Spleen (tissue), 13 donors: ENCODE measurements at regions of chr22 and their contacts with region 1.

Region 1: DNA sequence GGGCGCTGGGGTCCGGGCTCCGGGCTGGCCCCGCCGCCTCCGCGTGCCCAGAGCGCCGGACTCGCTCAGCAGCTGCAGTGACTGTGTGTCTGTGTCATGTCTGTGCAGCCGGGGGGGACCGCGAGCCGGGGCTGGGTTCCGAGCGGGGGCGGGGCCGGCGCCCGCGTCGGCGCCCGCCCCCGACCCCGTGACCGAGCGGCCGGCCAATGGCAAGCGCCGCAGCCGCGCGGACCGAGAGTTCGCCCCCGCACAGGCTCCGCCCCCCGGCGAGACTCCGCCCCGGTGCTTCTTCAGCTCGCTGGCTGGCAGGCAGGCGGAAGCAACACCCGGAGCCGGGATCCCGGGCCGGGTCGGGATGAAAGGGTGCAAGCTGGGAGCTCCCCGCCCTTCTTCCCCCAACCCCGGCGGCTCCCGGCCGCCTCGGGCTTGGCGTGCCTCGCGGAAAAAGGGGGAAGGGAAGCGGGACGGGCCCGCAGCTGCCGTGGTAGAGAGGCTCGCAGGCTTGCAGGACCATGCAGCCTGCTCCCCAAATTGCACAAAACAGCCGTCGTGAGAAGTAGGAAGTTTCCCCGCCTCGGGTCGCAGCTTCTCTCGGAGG is 750 bp upstream of the LARGE1 start:
- DNase-seq: peak; percentile 97
- H3K4me3 ChIP-seq: peak overlapping the region; percentile 53 to 85 (median 64)
- H3K27ac ChIP-seq: peak overlapping the region in 6 of 8 donors; percentile 30 to 76 (median 67)
- H3K4me1 ChIP-seq: peaks cover 9 to 66% (median 39%) of the 10 kb centered on the region in 6 donors
- H3K27me3 ChIP-seq: peaks cover 0 to 64% (median 11%) of the 10 kb centered on the region in 7 donors
- CTCF ChIP-seq: no peak
- POLR2A ChIP-seq: peak in 1 of 3 donors; percentile 65

Region 2: DNA sequence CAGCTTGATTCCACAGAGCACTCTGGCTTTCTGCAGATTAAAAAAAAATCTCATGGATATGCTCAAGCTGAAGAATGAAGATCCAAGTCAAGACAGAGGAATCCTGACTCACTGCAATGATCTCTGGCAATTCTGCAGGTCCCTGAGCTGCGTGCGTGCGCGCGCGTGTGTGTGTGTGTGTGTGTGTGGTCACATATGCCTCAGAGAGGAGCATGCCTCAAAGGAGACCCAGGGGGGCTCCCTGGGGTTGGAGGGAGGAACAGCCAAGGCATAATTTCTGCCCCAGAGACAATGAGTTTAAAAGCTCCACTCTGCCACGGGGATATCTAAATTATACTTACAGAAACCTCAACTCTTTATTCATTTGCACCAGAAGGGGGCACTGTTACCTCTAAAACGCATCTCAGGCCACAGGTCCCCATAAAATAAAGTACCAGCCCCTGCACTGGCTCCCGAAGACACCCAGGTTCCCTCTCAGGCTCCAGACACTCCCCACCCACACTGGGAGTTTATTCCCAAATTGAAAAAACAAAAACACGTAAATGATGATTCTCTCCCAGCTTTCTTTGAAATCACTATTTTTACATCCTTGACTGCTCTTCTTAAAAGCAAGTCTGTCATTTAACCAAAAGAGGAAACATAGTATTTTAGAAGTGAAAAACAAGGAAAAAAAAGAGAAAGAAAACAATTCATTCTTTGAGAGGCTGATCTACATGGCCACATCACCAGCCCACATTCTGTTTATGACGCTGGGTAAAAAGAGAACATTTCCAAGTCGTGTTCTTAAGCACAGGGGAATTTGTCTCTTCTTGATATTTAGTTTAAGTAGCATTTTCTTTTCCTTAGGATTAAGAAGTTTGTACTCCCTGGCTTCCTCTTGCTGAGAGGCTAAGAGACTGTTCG is 401.7 kb before region 1 on chr22:
- intact Hi-C with region 1: loop called (anchors 5 kb)
- DNase-seq: no peak
- H3K4me3 ChIP-seq: no peak overlapping the region
- H3K27ac ChIP-seq: peak overlapping the region in 2 of 8 donors; percentile 40 to 53
- H3K4me1 ChIP-seq: peaks cover 0 to 56% (median 18%) of the 10 kb centered on the region in 6 donors
- H3K27me3 ChIP-seq: no peaks in the 10 kb centered on the region
- CTCF ChIP-seq: peak in 9 of 11 experiments; percentile 26 to 63 (median 53)
- POLR2A ChIP-seq: no peak

Region 3: GRCh38 chr22:33785283-33785968 is 135.6 kb before region 1 on chr22:
- intact Hi-C with region 1: no loop called
- DNase-seq: no peak
- H3K4me3 ChIP-seq: no peak overlapping the region
- H3K27ac ChIP-seq: no peak overlapping the region
- H3K4me1 ChIP-seq: peaks cover 0 to 13% (median 9%) of the 10 kb centered on the region in 6 donors
- H3K27me3 ChIP-seq: no peaks in the 10 kb centered on the region
- CTCF ChIP-seq: no peak
- POLR2A ChIP-seq: no peak

Region 4: DNA sequence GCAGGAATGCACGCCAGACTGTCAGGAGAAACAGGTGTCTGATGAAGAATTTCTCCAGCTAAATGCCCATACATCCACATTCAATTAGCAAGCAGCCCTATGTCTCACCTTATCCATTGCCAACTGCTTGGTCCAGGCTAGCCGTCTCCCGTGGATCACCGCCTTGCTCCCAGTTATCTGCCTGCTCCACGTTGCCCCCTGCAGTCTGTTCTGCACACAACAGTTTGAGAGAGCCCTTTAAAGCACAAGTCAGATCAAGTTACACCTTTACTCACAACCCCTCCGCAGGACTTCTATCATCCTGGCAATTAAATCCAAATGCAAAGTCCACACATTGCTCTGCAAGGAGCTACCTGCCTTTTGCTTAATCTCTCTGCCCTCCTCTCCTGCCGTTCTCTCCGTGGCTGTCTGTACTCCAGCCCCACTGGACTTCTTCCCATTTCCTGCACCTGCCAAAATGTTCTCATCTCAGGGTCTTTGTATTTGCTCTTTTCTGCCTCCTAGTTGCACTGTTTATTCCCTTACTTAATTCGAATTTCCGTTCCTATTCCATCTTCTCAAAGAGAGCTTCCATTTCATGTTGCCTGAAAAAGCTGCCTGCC is 184.5 kb after region 1 on chr22:
- intact Hi-C with region 1: loop called (anchors 10 kb)
- DNase-seq: no peak
- H3K4me3 ChIP-seq: no peak overlapping the region
- H3K27ac ChIP-seq: no peak overlapping the region
- H3K4me1 ChIP-seq: no peaks in the 10 kb centered on the region
- H3K27me3 ChIP-seq: peaks cover 0 to 23% (median 0%) of the 10 kb centered on the region in 7 donors
- CTCF ChIP-seq: peak in 10 of 11 experiments; percentile 20 to 69 (median 48)
- POLR2A ChIP-seq: no peak

Region 5: DNA sequence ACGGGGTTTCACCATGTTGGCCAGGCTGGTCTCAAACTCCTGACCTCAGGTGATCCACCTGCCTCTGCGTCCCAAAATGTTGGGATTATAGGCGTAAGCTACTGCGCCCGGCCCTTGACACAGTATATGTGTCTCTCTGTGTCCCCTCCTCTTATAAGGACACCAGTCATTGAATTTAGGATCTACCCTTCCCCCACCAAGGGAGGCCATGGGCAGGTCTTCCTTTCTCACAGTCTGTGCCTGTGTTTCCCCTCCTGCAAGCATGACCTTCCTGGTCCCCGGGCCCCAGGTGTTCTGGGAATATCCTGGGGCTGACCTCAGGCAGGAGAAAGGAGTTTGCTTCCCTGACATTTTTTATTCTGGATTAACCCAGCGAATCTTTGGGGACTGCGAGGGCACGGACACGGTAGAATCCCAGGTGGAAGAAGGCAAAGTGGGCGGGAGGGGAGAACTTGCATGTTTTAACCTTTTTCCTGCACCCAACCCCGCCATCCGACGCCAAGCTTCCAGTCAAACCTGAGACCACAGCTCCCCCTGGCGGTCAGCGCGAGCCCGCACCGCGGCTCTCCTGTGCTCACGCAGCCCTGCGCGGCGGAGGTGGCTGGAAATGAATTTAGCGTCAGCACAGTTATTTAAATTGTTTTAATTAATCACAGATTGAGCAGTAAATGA is 1102.8 kb after region 1 on chr22:
- intact Hi-C with region 1: loop called (anchors 10 kb)
- DNase-seq: peak; percentile 87
- H3K4me3 ChIP-seq: no peak overlapping the region
- H3K27ac ChIP-seq: no peak overlapping the region
- H3K4me1 ChIP-seq: peaks cover 0 to 6% (median 0%) of the 10 kb centered on the region in 6 donors
- H3K27me3 ChIP-seq: peaks cover 0 to 60% (median 13%) of the 10 kb centered on the region in 7 donors
- CTCF ChIP-seq: peak in 10 of 11 experiments; percentile 36 to 88 (median 80)
- POLR2A ChIP-seq: no peak